Gastrocnemius medialis (tissue), 4 donors: ENCODE measurements at regions of chr1 and their contacts with region 1.

Region 1: DNA sequence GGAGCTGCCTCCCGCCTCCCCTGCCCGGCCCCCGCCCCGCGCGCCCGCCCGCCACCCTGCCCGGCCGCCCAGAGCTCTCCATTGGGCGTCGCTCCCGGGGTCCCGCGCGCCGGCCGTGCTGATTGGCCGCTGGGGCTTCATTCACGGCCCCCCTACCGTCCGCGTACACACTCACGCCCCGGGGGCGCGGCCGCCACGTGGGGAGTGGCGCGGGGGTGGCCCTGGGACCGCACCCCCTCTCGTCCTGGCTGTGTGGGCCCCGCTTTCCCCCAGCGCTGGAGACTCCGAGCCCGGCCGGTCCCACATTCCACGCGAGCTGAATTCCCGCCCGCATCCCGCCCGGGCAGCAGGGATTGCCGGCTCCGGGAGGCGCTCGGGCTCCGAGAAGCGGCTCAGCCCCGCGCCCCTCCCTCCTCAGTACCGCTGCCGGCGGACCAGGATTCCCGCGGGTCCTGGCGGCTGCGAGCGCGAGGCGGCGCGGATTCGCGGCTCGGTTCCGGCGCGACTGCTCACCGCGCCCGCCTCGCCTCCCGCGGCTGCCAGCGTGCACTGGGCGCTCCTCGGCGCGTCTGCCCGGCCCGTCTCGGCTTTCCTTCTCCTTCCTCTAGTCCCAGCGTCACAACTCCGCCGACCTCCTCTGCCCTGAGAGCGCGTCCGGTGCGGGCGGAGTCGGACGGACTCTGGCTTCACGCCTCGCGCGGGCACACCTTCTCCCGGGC is 450 bp upstream of the POU3F1 start:
- DNase-seq: peak; percentile 74 to 78
- ATAC-seq: peak; percentile 76 to 78
- H3K4me3 ChIP-seq: peak overlapping the region; percentile 68 to 88 (median 80)
- H3K27ac ChIP-seq: peak overlapping the region; percentile 61 to 72 (median 64)
- H3K4me1 ChIP-seq: peaks cover 17 to 24% of the 10 kb centered on the region in 2 donors
- H3K27me3 ChIP-seq: peaks cover 35 to 39% (median 36%) of the 10 kb centered on the region in 3 donors
- CTCF ChIP-seq: no peak
- POLR2A ChIP-seq: peak in 1 of 2 donors; percentile 47

Region 2: GRCh38 chr1:37989361-37989930 is 57.6 kb before region 1 on chr1:
- in situ Hi-C with region 1: no loop called
- intact Hi-C with region 1: loop called (anchors 2 kb)
- DNase-seq: no peak
- ATAC-seq: peak in 1 of 2 donors; percentile 10
- H3K4me3 ChIP-seq: peak overlapping the region; percentile 74 to 88 (median 80)
- H3K27ac ChIP-seq: peak overlapping the region; percentile 82 to 100 (median 96)
- H3K4me1 ChIP-seq: peaks cover 14 to 30% of the 10 kb centered on the region in 2 donors
- H3K27me3 ChIP-seq: no peaks in the 10 kb centered on the region
- CTCF ChIP-seq: no peak
- POLR2A ChIP-seq: no peak